ENCODE measurements at regions of chr14 and their contacts with region 1.

Region 1: GRCh38 chr14:76956316-76957090 is 72.0 kb downstream of the IRF2BPL start:
- DNase-seq: peak; percentile 94
- H3K4me3 Mint-ChIP-seq: peak overlapping the region; percentile 73
- H3K27ac Mint-ChIP-seq: peak overlapping the region; percentile 96
- H3K4me1 Mint-ChIP-seq: peaks cover 79% of the 10 kb centered on the region
- H3K27me3 Mint-ChIP-seq: peaks cover 4% of the 10 kb centered on the region

Region 2: GRCh38 chr14:76910371-76910890 is 46.1 kb before region 1 on chr14:
- CTCF ChIA-PET with region 1: interaction called, 35 read pairs
- POLR2A ChIA-PET with region 1: interaction called, 11 read pairs
- DNase-seq: no peak
- H3K4me3 Mint-ChIP-seq: no peak overlapping the region
- H3K27ac Mint-ChIP-seq: peak overlapping the region; percentile 53
- H3K4me1 Mint-ChIP-seq: peaks cover 55% of the 10 kb centered on the region
- H3K27me3 Mint-ChIP-seq: no peaks in the 10 kb centered on the region

Region 3: GRCh38 chr14:76926521-76927251 is 29.8 kb before region 1 on chr14:
- CTCF ChIA-PET with region 1: interaction called, 10 read pairs
- POLR2A ChIA-PET with region 1: interaction called, 39 read pairs
- DNase-seq: peak; percentile 77
- H3K4me3 Mint-ChIP-seq: peak overlapping the region; percentile 41
- H3K27ac Mint-ChIP-seq: peak overlapping the region; percentile 90
- H3K4me1 Mint-ChIP-seq: peaks cover 83% of the 10 kb centered on the region
- H3K27me3 Mint-ChIP-seq: peaks cover 7% of the 10 kb centered on the region

Region 4: GRCh38 chr14:77003950-77004752 is 47.6 kb after region 1 on chr14:
- CTCF ChIA-PET with region 1: no interaction called
- POLR2A ChIA-PET with region 1: no interaction called
- DNase-seq: no peak
- H3K4me3 Mint-ChIP-seq: no peak overlapping the region
- H3K27ac Mint-ChIP-seq: no peak overlapping the region
- H3K4me1 Mint-ChIP-seq: peaks cover 3% of the 10 kb centered on the region
- H3K27me3 Mint-ChIP-seq: peaks cover 3% of the 10 kb centered on the region

Region 5: DNA sequence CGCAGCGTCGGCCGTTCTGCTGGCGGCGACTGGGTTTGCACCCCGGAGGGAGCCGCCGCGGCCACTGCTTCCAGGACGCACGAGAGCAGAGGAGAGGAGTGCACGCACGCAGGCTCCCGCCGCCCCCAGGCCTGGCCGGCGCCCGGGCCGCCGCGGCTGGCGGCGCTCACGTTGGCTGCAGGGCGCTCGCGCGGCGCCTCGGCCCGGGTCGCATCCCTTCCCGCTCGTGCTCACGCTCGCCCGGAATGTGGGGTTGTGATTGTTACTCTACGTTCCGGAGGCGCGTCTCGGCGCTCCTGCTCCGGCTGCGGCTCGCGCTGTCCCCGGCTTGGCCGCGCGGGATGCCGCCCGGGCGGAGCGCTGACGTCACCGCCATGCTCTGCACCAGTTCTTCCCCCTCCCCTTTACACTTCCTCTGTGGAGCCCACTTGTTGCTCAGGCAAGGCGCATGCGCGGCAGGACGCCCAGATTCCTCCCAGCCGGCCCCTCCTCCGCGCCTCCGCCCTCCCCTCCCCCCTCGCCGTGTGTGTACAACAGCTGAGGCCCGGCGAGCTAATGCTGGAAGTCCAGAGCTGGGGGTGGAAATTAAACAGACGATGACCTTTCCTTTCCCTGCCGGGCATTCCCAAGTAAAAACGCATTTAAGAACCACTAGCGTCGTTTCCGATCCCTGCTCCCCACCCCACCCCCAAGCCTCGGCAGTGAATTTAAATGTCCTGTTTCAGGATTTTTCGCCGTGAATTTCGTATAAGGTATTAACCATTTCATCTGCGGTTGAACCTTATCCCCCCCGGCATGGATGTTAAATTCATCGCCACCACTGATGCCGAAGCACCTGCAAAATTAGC is 72.1 kb after region 1 on chr14 and contains the start of gene IRF2BPL:
- CTCF ChIA-PET with region 1: interaction called, 15 read pairs
- POLR2A ChIA-PET with region 1: interaction called, 130 read pairs
- DNase-seq: peak; percentile 95
- H3K4me3 Mint-ChIP-seq: peak within 1 kb of the TSS; percentile 88
- H3K27ac Mint-ChIP-seq: peak within 1 kb of the TSS; percentile 89
- H3K4me1 Mint-ChIP-seq: peaks cover 58% of the 10 kb centered on the region
- H3K27me3 Mint-ChIP-seq: no peaks in the 10 kb centered on the region
- total RNA-seq, gene IRF2BPL: 39.0 to 39.3 TPM

Region 6: DNA sequence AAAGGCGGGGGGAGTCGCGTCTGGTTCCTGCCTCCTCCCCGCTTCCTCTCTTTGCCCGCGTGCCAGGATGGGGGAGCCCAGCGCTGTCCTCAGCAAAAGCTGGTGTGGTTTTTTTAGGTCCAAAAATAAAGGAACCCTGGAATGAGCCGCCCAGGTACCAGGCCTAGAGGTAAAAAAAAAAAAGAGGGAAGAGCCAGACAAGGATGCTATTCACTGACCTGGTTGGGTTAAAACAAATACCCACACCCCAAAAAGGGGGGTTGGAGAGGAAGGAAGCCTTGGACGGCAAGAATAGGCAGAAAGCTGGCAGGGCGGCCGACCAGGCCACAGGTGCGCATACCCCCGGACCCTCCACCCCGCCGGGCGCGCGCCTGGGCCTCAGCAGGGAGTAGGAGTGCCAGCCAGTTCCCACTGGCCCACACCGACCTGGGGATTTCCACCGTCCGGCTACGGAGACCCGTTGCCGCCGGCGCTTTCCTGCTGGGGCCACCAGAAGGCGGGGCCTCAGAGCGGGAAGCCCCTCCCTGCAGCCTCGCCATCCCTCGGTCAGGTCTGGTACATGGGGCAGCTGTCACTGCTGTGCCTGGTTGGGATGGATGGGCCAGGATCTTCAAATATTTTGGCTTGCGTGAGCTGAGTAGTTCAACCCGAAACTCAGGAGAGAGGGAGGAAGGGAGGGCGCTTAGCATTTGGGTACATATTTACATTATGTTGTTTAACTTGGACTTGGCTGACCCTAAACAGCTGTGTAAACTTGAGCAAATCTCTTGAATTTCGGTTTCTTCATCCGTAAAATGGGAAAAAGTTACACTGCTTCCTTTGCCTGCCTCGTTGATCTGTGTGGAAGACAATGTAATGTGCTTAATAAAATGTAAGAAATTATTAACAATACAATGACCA is 77.4 kb after region 1 on chr14:
- CTCF ChIA-PET with region 1: interaction called, 11 read pairs
- POLR2A ChIA-PET with region 1: interaction called, 130 read pairs
- DNase-seq: peak; percentile 83
- H3K4me3 Mint-ChIP-seq: peak overlapping the region; percentile 85
- H3K27ac Mint-ChIP-seq: peak overlapping the region; percentile 94
- H3K4me1 Mint-ChIP-seq: peaks cover 79% of the 10 kb centered on the region
- H3K27me3 Mint-ChIP-seq: no peaks in the 10 kb centered on the region

Region 7: GRCh38 chr14:77040059-77040740 is 83.7 kb after region 1 on chr14:
- CTCF ChIA-PET with region 1: interaction called, 6 read pairs
- POLR2A ChIA-PET with region 1: interaction called, 34 read pairs
- DNase-seq: peak; percentile 92
- H3K4me3 Mint-ChIP-seq: peak overlapping the region; percentile 63
- H3K27ac Mint-ChIP-seq: peak overlapping the region; percentile 100
- H3K4me1 Mint-ChIP-seq: peaks cover 87% of the 10 kb centered on the region
- H3K27me3 Mint-ChIP-seq: no peaks in the 10 kb centered on the region

Region 8: GRCh38 chr14:77053046-77053841 is 96.7 kb after region 1 on chr14:
- CTCF ChIA-PET with region 1: interaction called, 19 read pairs
- POLR2A ChIA-PET with region 1: interaction called, 11 read pairs
- DNase-seq: peak; percentile 71
- H3K4me3 Mint-ChIP-seq: no peak overlapping the region
- H3K27ac Mint-ChIP-seq: no peak overlapping the region
- H3K4me1 Mint-ChIP-seq: peaks cover 24% of the 10 kb centered on the region
- H3K27me3 Mint-ChIP-seq: peaks cover 2% of the 10 kb centered on the region

Measured in activated CD4-positive, alpha-beta memory T cell treated with anti-CD3 and anti-CD28 coated beads, Interleukin-2, amount 10 ng/mL, durations not matched to agents 7 days and 5 days (primary cell).